Gastrocnemius medialis (tissue), 4 donors: ENCODE measurements at regions of chr1 and their contacts with region 1.

Region 1: GRCh38 chr1:56255516-56256152 is 323.7 kb downstream of the PLPP3 start:
- DNase-seq: peak; percentile 88 to 92
- ATAC-seq: peak; percentile 91
- H3K4me3 ChIP-seq: no peak overlapping the region
- H3K27ac ChIP-seq: peak overlapping the region; percentile 69 to 85 (median 80)
- H3K4me1 ChIP-seq: peaks cover 42% of the 10 kb centered on the region in 2 donors
- H3K27me3 ChIP-seq: no peaks in the 10 kb centered on the region
- CTCF ChIP-seq: no peak
- POLR2A ChIP-seq: peak in 1 of 2 donors; percentile 10

Region 2: GRCh38 chr1:55696181-55696754 is 559.4 kb before region 1 on chr1:
- in situ Hi-C with region 1: no loop called
- intact Hi-C with region 1: loop called (anchors 10 kb)
- DNase-seq: peak; percentile 28 to 57
- ATAC-seq: peak; percentile 26 to 28
- H3K4me3 ChIP-seq: no peak overlapping the region
- H3K27ac ChIP-seq: peak overlapping the region; percentile 55 to 64 (median 60)
- H3K4me1 ChIP-seq: peaks cover 21 to 35% of the 10 kb centered on the region in 2 donors
- H3K27me3 ChIP-seq: no peaks in the 10 kb centered on the region
- CTCF ChIP-seq: no peak
- POLR2A ChIP-seq: no peak

Region 3: DNA sequence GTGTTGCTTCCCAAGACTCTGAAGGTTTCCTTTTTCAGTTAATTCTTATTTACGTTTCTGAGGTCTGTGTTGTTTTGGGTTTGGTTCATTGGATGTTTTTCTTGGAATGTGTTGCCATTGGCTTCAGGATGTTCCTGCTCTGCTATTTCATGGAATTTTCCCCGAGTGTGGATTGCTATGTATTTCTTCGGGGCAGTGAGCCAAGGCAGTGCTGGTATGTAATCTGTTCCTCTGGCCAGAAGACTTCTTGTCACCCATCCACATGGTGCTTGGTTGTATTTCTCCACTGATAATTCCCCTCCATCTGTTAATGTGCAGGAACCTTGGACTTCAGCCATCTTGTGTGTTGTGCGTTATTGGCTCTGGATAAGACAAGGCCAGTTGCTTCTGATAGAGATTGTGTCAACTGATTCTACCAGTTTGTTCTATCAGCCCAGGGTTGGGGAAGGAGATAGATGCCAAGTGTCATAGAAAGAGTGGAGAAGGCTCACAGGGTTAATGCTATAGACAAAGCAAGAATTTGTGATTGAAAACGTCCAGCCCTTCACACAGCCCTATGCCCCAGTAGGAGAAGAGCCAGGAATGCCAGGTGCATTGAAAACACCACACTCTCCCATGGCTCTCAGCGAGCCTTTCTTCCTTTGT is 181.5 kb before region 1 on chr1:
- in situ Hi-C with region 1: no loop called
- intact Hi-C with region 1: loop called (anchors 5 kb)
- DNase-seq: peak; percentile 59 to 75
- ATAC-seq: peak; percentile 73
- H3K4me3 ChIP-seq: peak overlapping the region in 1 of 4 donors; percentile 1
- H3K27ac ChIP-seq: peak overlapping the region; percentile 70 to 82 (median 76)
- H3K4me1 ChIP-seq: peaks cover 21 to 23% of the 10 kb centered on the region in 2 donors
- H3K27me3 ChIP-seq: no peaks in the 10 kb centered on the region
- CTCF ChIP-seq: no peak
- POLR2A ChIP-seq: no peak

Region 4: GRCh38 chr1:56149761-56150160 is 105.9 kb before region 1 on chr1:
- in situ Hi-C with region 1: no loop called
- intact Hi-C with region 1: loop called (anchors 5 kb)
- DNase-seq: no peak
- ATAC-seq: no peak
- H3K4me3 ChIP-seq: no peak overlapping the region
- H3K27ac ChIP-seq: peak overlapping the region in 1 of 4 donors; percentile 24
- H3K4me1 ChIP-seq: peaks cover 10 to 21% of the 10 kb centered on the region in 2 donors
- H3K27me3 ChIP-seq: no peaks in the 10 kb centered on the region
- CTCF ChIP-seq: no peak
- POLR2A ChIP-seq: no peak

Region 5: DNA sequence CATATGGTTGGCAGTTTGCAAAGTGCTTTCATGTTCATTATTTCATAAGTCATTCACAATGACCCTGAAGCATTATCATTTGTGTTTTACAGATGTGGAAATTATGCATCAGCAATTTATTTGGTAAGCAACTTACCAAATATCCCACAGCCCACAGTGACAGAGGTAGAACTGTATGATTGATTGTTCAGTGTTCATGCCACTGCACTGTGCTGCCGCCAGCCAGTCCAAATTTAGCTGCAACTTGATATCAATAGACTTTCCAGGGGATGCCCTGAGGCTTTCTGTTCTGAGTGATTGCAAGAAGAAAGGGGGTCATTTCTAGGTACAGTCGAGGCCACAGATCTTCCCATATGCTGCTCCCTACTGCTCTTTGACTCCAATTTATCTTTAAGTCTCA is 56.6 kb before region 1 on chr1:
- in situ Hi-C with region 1: no loop called
- intact Hi-C with region 1: loop called (anchors 2 kb)
- DNase-seq: peak; percentile 38 to 60
- ATAC-seq: peak; percentile 78 to 80
- H3K4me3 ChIP-seq: no peak overlapping the region
- H3K27ac ChIP-seq: peak overlapping the region; percentile 70 to 81 (median 76)
- H3K4me1 ChIP-seq: peaks cover 37 to 46% of the 10 kb centered on the region in 2 donors
- H3K27me3 ChIP-seq: no peaks in the 10 kb centered on the region
- CTCF ChIP-seq: no peak
- POLR2A ChIP-seq: no peak

Region 6: GRCh38 chr1:56212143-56212542 is 43.5 kb before region 1 on chr1:
- in situ Hi-C with region 1: no loop called
- intact Hi-C with region 1: no loop called
- DNase-seq: no peak
- ATAC-seq: no peak
- H3K4me3 ChIP-seq: no peak overlapping the region
- H3K27ac ChIP-seq: no peak overlapping the region
- H3K4me1 ChIP-seq: no peaks in the 10 kb centered on the region
- H3K27me3 ChIP-seq: no peaks in the 10 kb centered on the region
- CTCF ChIP-seq: no peak
- POLR2A ChIP-seq: no peak

Region 7: DNA sequence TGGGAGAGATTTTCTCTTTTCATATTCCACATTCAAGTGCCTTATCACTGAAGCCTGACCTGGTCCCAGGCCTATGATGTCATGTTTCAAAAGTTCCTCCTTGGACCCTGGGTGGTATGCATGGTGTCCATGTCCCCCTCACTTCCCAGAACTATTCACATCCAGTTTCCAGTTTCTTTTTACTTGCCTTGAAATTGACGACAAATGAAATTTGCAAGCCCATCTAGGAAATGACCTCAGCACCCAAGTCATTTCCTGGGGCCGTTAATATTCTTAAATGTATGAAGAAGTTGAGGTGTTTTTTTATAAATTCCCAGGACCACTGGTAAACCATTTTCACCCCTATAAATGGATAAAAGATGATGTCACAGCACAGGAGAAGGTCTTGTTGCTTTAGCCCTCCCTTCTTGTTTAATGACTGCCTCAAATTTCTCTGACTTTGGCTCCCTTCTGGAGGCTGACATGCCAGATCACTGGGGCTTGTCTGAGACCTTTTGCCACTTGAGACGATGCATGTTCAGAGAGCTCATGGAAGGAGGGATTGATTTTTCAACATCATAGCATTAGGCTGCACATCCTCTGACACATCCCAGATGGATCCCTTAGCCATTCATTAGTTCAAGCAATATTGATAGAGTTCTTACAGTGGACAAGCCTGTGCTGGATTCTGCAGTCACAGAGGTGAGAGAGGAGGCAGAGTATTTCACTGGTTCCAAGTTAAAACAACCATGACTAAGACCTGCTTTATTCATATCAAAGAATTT is 102.5 kb after region 1 on chr1:
- in situ Hi-C with region 1: no loop called
- intact Hi-C with region 1: loop called (anchors 5 kb)
- DNase-seq: no peak
- ATAC-seq: no peak
- H3K4me3 ChIP-seq: no peak overlapping the region
- H3K27ac ChIP-seq: peak overlapping the region; percentile 73 to 92 (median 82)
- H3K4me1 ChIP-seq: peaks cover 50 to 54% of the 10 kb centered on the region in 2 donors
- H3K27me3 ChIP-seq: no peaks in the 10 kb centered on the region
- CTCF ChIP-seq: no peak
- POLR2A ChIP-seq: no peak

Region 8: DNA sequence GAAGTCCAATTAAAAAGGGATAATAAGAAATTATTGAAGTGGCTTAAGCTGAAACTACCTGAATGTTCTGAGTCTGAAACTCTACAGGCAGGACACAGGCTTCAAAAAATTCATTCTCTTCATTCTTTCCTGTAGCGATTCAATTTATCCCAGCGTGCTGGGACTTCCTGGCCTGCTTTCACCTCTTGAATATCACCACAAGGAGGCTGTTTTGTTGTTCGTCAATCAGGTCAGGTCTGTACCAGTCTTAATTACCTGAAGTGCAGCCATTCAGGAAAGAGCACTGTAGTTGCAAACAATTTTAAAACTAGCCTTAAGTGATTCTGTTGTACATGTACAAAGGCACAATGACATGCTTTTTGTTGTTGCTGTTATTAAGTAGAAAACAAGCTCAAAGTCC is 525.2 kb after region 1 on chr1:
- in situ Hi-C with region 1: no loop called
- intact Hi-C with region 1: no loop called
- DNase-seq: no peak
- ATAC-seq: no peak
- H3K4me3 ChIP-seq: no peak overlapping the region
- H3K27ac ChIP-seq: no peak overlapping the region
- H3K4me1 ChIP-seq: no peaks in the 10 kb centered on the region
- H3K27me3 ChIP-seq: no peaks in the 10 kb centered on the region
- CTCF ChIP-seq: no peak
- POLR2A ChIP-seq: no peak